ENCODE measurements at regions of chr7 and their contacts with region 1.

Region 1: DNA sequence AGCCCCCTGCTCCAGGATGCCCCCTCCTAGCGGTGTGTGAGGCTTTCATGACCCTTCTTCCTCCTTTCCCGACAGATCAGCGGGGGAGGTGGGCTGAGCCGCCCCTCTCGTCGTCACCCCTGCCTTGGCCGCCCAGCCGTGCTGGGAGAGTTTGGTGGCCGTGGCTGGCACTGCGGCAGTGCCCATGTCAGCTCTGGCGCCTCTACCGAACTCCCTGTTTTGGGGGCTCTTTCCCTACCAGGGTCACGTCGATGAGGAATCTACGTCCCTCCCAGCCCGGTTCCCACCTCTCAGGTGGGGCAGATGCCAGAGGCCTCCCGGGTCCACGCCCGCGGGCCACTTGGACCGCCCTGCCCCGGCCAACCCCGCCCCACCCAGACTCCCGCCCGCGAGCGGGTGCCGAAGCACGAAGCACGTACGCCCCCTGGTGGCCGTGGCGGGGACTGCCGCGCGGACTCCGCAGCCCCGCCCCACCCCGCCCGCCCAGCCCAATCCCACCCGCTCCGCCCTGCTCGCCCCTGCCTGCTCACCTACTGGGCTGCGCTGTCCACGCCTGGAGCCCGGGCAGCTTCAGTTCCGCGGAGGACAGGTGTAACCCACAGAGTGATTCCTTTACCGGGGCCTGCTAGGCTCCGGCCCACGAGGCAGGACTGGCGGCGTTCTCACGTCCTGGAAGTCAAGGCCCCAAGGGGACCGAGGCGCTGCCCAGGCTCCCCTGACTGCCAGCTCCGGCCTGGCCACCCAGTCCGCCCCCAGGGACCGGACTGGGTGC is 127.1 kb downstream of the UBE2H start:
- DNase-seq: peak; percentile 95
- H3K4me3 ChIP-seq: peak overlapping the region; percentile 66 to 76 (median 74)
- H3K27ac ChIP-seq: peak overlapping the region; percentile 61 to 74 (median 64)
- H3K4me1 ChIP-seq: peaks cover 24 to 36% (median 32%) of the 10 kb centered on the region in 4 donors
- H3K27me3 ChIP-seq: no peaks in the 10 kb centered on the region
- CTCF ChIP-seq: peak in 2 of 3 experiments; percentile 55 to 100
- EP300 ChIP-seq: no peak
- POLR2A ChIP-seq: no peak

Region 2: DNA sequence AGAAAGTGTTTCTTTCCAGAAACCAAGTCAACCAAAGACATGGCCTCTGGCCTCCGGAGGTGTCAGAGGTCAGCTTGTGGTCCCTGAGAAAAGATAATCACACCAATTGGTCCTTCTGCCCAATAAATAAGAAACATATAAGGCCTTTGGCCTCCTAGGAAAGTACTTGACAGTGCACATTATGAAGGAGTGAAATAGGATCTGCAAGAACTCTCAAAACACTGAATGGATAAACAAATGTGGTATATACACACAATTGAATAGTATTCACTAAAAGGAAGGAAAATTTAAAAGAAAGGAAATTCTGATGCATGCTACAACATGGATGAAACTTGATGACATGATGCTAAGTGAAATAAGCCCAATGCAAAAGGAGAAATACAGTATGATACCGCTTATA is 249.5 kb before region 1 on chr7:
- intact Hi-C with region 1: loop called (anchors 5 kb)
- DNase-seq: no peak
- H3K4me3 ChIP-seq: no peak overlapping the region
- H3K27ac ChIP-seq: no peak overlapping the region
- H3K4me1 ChIP-seq: no peaks in the 10 kb centered on the region
- H3K27me3 ChIP-seq: no peaks in the 10 kb centered on the region
- CTCF ChIP-seq: no peak
- EP300 ChIP-seq: no peak
- POLR2A ChIP-seq: no peak

Region 3: GRCh38 chr7:129889133-129889844 is 63.6 kb after region 1 on chr7:
- intact Hi-C with region 1: no loop called
- DNase-seq: no peak
- H3K4me3 ChIP-seq: no peak overlapping the region
- H3K27ac ChIP-seq: no peak overlapping the region
- H3K4me1 ChIP-seq: peaks cover 19 to 42% (median 26%) of the 10 kb centered on the region in 4 donors
- H3K27me3 ChIP-seq: no peaks in the 10 kb centered on the region
- CTCF ChIP-seq: no peak
- EP300 ChIP-seq: no peak
- POLR2A ChIP-seq: no peak

Region 4: GRCh38 chr7:129948877-129949291 is 123.2 kb after region 1 on chr7:
- intact Hi-C with region 1: loop called (anchors 2 kb)
- DNase-seq: peak; percentile 97
- H3K4me3 ChIP-seq: peak overlapping the region; percentile 90 to 100 (median 97)
- H3K27ac ChIP-seq: peak overlapping the region; percentile 97 to 99 (median 98)
- H3K4me1 ChIP-seq: peaks cover 35 to 62% (median 47%) of the 10 kb centered on the region in 4 donors
- H3K27me3 ChIP-seq: no peaks in the 10 kb centered on the region
- CTCF ChIP-seq: no peak
- EP300 ChIP-seq: no peak
- POLR2A ChIP-seq: no peak

Region 5: DNA sequence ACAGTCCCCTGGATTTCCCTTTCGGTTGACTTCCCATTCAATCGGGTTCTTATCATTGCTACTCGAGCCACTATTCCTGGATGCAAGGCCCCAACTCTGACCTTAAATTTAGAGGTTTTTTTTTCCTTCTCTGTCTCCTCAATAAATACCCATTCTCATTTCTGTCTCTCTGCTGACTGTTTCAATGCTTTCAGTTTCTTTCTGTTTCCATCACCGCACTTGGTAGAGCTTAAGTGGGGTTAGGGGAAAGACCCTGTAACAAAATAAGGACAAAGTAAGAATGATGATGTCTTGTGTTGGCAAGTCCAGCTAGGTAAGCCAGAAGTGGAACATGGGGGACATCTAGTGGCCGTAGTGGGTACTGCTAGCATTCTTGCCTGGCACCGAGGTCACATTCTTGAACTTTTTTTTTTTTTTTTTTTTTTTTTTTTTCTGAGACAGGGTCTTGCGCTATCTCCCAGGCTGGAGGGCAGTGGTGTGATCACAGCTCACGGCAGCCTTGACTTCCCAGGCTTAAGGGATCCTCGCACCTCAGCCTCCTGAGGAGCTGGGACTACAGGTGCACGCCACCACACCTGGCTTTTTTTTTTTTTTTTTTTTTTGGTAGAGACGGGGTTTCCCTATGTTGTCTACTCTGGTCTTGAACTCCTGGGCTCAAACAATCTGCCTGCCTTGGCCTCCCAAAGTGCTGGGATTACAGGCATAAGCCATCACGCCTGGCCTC is 185.2 kb after region 1 on chr7:
- intact Hi-C with region 1: loop called (anchors 2 kb)
- DNase-seq: peak; percentile 97
- H3K4me3 ChIP-seq: no peak overlapping the region
- H3K27ac ChIP-seq: no peak overlapping the region
- H3K4me1 ChIP-seq: peaks cover 0 to 14% (median 8%) of the 10 kb centered on the region in 4 donors
- H3K27me3 ChIP-seq: no peaks in the 10 kb centered on the region
- CTCF ChIP-seq: peak; percentile 77 to 94 (median 84)
- EP300 ChIP-seq: no peak
- POLR2A ChIP-seq: no peak